Aorta (tissue), 5 donors: ENCODE measurements at regions of chr12 and their contacts with region 1.

Region 1: GRCh38 chr12:47504775-47505446 is 200.9 kb downstream of the RPAP3 start:
- DNase-seq: no peak
- ATAC-seq: no peak
- H3K4me3 ChIP-seq: no peak overlapping the region
- H3K27ac ChIP-seq: peak overlapping the region; percentile 36 to 80
- H3K4me1 ChIP-seq: peaks cover 2 to 7% of the 10 kb centered on the region in 2 donors
- H3K27me3 ChIP-seq: no peaks in the 10 kb centered on the region

Region 2: GRCh38 chr12:47397664-47398281 is 107.1 kb before region 1 on chr12:
- intact Hi-C with region 1: loop called in 1 of 2 experiments (anchors 10 kb)
- DNase-seq: no peak
- ATAC-seq: peak; percentile 66
- H3K4me3 ChIP-seq: no peak overlapping the region
- H3K27ac ChIP-seq: no peak overlapping the region
- H3K4me1 ChIP-seq: no peaks in the 10 kb centered on the region
- H3K27me3 ChIP-seq: no peaks in the 10 kb centered on the region

Region 3: DNA sequence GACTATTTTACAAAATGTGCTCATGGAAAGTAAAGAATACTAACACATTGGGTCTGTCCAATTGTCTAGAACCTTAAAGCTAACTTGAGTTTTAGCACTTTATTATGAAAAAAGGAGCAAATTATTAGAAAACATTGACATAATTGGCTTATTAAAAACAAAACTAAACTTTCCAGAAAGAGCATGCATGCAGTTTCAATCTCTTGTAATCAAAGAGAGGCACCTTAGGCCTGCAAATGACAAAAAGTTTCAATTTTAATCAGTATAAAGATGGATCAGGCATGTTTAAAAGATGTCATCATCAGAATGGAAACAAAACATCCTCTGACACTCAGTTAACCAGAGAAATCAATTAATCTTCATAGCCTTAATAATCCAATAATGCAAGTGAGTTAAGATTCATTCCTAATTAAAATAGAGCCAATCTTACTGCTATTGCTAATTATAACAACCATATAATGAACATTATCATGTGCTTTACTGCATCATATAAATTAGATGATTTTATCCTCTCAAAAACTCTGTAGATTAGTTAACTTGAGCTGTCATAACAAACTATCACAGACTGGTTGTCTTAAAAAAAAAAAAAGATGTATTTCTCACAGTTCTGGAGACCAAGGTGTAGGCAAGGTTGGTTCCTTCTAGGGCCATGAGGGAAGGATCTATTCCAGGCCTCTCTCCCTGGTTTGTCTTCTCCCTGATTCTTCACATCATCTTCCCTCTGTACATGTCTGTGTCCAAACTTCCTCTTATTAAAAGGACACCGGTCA is 69.5 kb after region 1 on chr12:
- intact Hi-C with region 1: no loop called
- DNase-seq: no peak
- ATAC-seq: no peak
- H3K4me3 ChIP-seq: no peak overlapping the region
- H3K27ac ChIP-seq: no peak overlapping the region
- H3K4me1 ChIP-seq: peaks cover 0 to 1% of the 10 kb centered on the region in 2 donors
- H3K27me3 ChIP-seq: peaks cover 0 to 2% of the 10 kb centered on the region in 2 donors